Sciatic nerve (tissue), 2 donors: ENCODE measurements at regions of chr9 and their contacts with region 1.

Region 1: DNA sequence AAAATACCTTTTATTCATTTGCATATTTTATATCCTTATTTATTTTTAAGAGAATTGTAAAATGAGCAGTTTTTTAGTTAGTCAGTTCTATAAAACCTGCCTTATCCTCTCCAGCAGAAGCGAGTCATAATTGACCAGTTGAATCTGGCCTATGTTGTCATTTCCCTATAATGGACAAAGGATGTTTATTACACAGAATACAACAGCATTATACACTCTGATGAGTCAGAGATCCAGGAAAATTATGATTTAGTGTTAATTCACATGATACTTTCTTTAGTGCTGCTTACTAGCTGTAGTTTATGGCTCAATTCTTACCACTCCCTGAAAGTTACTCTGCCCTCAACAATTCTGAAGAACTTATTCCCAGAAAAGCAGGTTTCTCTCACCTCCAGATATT is 26.8 kb upstream of the LURAP1L start:
- DNase-seq: no peak
- ATAC-seq: no peak

Region 2: DNA sequence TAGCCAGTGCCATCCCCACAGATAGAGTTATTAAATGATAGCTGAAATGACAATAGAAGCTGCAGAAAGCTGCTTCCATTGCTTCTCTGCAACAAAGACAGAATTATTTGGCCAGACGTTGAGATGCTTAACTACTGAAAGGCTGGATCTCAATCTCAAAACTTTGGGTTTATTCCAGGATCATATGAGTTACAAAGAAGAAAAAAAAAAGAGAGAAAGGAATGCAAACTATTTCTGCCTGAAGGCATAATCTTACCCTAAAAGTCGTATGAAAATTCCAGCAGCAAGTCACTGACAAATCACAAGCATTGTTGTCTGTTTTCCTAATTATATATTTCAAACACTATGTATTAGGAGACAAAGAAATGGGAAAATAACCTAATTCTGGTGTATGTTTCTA is 67.7 kb before region 1 on chr9:
- intact Hi-C with region 1: loop called (anchors 10 kb)
- DNase-seq: no peak
- ATAC-seq: no peak